Vagina (tissue), 2 donors: ENCODE measurements at regions of chr16 and their contacts with region 1.

Region 1: GRCh38 chr16:18801197-18801972 is at the start of gene ARL6IP1:
- DNase-seq: peak; percentile 98 to 99
- H3K4me3 ChIP-seq: peak within 1 kb of the TSS; percentile 88 to 98
- H3K27ac ChIP-seq: peak within 1 kb of the TSS; percentile 89
- H3K4me1 ChIP-seq: peaks cover 38% of the 10 kb centered on the region
- H3K27me3 ChIP-seq: no peaks in the 10 kb centered on the region
- CTCF ChIP-seq: peak; percentile 80 to 93 (median 84)
- POLR2A ChIP-seq: peak; percentile 72 to 97
- total RNA-seq, gene ARL6IP1: 103 TPM

Region 2: GRCh38 chr16:18816286-18816685 is 14.9 kb after region 1 on chr16:
- intact Hi-C with region 1: no loop called
- DNase-seq: no peak
- H3K4me3 ChIP-seq: no peak overlapping the region
- H3K27ac ChIP-seq: no peak overlapping the region
- H3K4me1 ChIP-seq: no peaks in the 10 kb centered on the region
- H3K27me3 ChIP-seq: no peaks in the 10 kb centered on the region
- CTCF ChIP-seq: no peak
- POLR2A ChIP-seq: no peak

Region 3: DNA sequence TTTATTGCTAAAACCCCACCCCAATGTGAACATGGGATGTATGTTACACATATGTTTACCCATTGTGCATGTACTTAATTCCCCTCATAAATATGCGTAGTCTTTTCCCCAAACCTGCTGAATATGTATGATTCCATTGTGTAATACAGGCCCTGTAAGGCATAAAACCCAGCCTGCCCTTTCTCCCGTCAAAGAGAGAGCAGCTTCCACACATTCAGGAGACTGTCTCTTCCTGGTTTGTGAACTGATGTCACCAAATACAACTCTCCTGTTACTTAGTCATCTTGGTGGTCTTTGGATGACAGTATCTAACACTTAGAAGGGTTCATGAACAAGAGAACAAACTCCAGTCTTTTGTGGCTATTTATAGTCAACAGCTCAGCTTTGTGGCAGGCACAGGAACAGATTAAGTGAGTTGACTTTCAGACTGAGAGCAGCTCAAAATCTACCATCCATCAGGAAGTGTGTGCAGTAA is 157.7 kb after region 1 on chr16:
- intact Hi-C with region 1: loop called (anchors 10 kb)
- DNase-seq: no peak
- H3K4me3 ChIP-seq: no peak overlapping the region
- H3K27ac ChIP-seq: no peak overlapping the region
- H3K4me1 ChIP-seq: peaks cover 9% of the 10 kb centered on the region
- H3K27me3 ChIP-seq: no peaks in the 10 kb centered on the region
- CTCF ChIP-seq: no peak
- POLR2A ChIP-seq: no peak